Activated T-helper 1 cell treated with anti-CD3 and anti-CD28 coated beads, Interleukin-12 subunit alpha, Interleukin-12 subunit beta, Interleukin-2, Interleukin-4 antibody, amounts not matched to agents 30 ng/mL and 10 ng/mL and 1 ng/mL, durations not matched to agents 14 hours and 24 hours and 36 hours (primary cell): ENCODE measurements at regions of chr12 and their contacts with region 1.

Region 1: DNA sequence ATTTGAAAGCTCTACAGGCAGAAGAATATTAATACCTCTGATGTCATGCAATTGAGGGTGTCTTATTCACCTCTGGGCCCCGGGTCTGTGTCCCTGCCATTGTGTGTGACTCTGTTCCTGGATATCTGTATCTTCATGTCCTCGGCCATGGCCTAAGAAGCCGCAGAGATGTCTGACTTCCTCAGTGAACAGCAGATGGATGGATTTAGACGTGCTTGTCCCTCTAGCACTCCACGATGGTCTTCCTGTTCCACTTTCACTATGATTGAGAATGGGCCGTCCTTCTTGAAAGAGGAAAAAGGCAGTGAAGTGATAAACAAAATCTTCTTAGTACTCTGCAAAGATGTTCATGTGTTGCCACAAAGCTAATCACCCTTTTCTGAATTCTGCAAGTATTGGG is 217.4 kb downstream of the SLC41A2 start:
- DNase-seq: peak; percentile 40
- H3K4me3 Mint-ChIP-seq: peak overlapping the region; percentile 71
- H3K27ac Mint-ChIP-seq: peak overlapping the region; percentile 82
- H3K4me1 Mint-ChIP-seq: peaks cover 75% of the 10 kb centered on the region
- H3K27me3 Mint-ChIP-seq: no peaks in the 10 kb centered on the region

Region 2: DNA sequence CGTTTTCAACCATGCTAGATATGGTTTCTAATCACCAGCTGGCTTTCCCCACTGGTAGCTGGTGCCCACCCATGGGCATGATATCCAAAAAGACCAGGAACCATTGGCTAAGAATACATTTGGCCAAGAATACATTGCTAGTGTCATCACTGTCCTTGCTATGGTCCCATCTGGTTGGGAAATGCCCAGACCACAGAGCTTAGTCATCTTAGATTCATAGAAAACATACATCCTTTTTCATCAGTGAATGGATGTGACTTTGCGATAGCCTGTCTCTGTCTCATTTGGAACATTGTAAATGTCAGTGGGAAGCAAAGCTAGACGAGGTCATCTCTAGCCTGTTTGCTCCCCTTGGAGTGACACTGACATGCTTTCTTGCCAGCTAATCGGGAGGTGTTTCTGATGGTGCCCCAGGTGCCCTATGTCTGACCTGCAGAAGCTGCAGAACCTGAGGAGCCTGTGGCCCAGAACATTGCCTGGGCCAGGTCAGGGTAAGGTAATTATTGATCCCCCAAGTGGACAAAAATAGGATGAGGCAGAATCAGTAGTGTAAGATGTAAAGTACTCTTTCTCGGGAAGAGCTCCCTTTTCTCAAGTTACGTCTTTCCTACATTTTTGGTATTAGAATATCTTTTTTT is 22.6 kb after region 1 on chr12:
- intact Hi-C with region 1: loop called (anchors 2 kb)
- DNase-seq: no peak
- H3K4me3 Mint-ChIP-seq: peak overlapping the region; percentile 76
- H3K27ac Mint-ChIP-seq: peak overlapping the region; percentile 91
- H3K4me1 Mint-ChIP-seq: peaks cover 70% of the 10 kb centered on the region
- H3K27me3 Mint-ChIP-seq: no peaks in the 10 kb centered on the region